OCI-LY7 (cell line): ENCODE measurements at regions of chr19 and their contacts with region 1.

Region 1: DNA sequence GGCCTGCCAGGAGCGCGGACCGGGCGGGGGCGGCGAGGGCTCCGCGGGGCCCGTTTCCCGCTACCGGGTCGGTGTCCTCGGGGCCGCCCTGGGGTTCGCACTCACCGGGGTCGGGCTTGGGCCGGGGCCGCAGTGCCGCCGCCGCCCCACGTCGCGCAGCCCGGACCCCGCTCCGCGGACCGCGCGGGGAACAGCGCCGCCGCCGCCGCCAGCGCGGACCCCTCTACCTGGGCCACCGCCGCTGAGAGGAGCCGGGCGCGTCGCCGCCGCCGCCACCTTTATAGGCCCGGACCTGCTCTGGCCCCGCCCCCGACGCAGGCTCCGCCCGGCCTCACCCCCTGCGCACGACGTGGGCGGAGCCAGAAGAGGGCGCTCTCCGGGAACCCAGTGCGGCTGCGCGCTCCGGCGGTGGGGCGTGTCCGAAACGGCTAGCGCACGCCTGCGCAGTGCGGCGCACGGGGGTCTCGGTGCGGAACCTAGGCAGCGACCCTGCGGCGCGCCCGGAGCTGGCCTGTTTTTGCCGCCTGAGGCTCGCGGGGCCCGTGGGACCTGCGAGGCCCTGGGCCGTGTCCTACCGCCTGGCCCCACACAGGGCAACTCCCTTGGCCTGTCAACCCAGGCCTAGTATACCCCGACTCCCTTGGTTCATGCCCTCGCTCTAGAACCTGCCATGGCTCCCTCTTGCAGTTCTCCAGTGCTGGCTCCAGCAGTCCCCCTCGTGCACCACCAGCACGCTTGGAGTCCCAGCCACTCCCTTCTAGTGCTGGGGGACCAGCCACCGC is at the start of gene MKNK2:
- DNase-seq: peak; percentile 93
- H3K4me3 ChIP-seq: peak within 1 kb of the TSS; percentile 98
- H3K27ac ChIP-seq: peak within 1 kb of the TSS; percentile 70
- H3K4me1 ChIP-seq: peaks cover 58% of the 10 kb centered on the region
- CTCF ChIP-seq: peak; percentile 69
- total RNA-seq, gene MKNK2: 97.0 and 115 TPM in 2 replicates

Region 2: DNA sequence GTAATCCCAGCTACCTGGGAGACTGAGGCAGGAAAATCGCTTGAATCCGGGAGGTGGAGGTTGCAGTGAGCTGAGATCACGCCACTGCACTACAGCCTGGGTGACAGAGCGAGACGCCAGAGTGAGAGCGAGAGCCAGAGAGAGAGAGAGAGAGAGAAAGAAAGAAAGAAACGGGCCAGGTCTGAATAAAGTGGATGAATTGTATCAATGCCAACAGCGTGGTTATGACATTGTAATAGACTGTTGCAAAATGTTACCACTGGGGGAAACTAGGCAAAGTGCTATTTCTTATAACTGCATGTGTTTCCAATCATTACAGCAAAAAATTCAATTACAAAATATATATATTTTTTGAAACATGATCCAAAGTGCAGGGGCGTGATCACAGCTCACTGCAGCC is 23.8 kb before region 1 on chr19:
- CTCF ChIA-PET with region 1: no interaction called
- POLR2A ChIA-PET with region 1: no interaction called
- intact Hi-C with region 1: no loop called
- DNase-seq: no peak
- H3K4me3 ChIP-seq: no peak overlapping the region
- H3K27ac ChIP-seq: no peak overlapping the region
- H3K4me1 ChIP-seq: peaks cover 4% of the 10 kb centered on the region
- CTCF ChIP-seq: no peak

Region 3: GRCh38 chr19:2469102-2469914 is 418.1 kb after region 1 on chr19:
- CTCF ChIA-PET with region 1: interaction called, 12 read pairs
- POLR2A ChIA-PET with region 1: no interaction called
- intact Hi-C with region 1: no loop called
- DNase-seq: no peak
- H3K4me3 ChIP-seq: no peak overlapping the region
- H3K27ac ChIP-seq: no peak overlapping the region
- H3K4me1 ChIP-seq: peaks cover 24% of the 10 kb centered on the region
- CTCF ChIP-seq: no peak